HEK293T (cell line): ENCODE measurements at regions of chrX and their contacts with region 1.

Region 1: DNA sequence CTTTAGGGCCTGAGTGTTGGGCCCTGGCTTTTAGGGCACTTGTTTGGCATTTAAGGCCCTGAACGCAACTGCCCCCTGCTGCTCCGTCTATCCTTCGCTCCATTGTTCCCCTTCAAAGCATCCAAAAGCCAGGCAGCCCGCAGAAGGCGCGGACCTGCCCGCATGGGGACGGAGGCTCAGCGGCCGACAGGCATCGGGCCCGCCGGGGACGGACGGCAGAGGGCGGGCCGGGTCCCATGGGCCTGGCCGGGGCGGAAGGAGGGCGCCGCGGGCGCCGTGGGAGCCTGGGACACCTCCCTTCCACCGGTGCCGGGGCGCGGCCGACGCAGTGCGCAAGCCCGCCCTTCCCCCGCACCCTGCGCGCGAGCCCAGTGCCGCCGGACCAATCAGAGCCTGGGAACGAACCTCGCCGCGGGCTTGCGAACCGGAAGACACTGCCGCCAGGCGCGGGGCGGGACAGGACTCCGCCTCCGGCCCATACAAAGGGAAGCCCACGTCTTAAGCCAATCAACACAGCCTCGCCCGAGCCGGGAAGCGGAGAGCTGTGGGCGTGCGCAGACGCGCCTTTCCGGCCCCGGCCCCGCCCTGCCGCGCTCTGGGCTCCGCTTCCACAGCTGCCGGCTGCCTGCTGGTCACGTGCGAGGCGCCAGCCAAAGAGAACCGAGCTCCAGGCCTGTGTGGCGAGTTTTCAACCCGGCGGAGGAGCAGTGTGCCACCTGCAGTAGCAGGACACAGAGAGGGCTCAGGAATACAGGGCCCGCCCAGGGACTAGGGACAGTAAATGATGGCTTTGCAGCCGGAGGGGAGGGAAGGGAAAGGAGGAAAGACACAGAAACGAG is 2.1 kb upstream of the ARHGAP4 start:
- DNase-seq: peak; percentile 98

Region 2: DNA sequence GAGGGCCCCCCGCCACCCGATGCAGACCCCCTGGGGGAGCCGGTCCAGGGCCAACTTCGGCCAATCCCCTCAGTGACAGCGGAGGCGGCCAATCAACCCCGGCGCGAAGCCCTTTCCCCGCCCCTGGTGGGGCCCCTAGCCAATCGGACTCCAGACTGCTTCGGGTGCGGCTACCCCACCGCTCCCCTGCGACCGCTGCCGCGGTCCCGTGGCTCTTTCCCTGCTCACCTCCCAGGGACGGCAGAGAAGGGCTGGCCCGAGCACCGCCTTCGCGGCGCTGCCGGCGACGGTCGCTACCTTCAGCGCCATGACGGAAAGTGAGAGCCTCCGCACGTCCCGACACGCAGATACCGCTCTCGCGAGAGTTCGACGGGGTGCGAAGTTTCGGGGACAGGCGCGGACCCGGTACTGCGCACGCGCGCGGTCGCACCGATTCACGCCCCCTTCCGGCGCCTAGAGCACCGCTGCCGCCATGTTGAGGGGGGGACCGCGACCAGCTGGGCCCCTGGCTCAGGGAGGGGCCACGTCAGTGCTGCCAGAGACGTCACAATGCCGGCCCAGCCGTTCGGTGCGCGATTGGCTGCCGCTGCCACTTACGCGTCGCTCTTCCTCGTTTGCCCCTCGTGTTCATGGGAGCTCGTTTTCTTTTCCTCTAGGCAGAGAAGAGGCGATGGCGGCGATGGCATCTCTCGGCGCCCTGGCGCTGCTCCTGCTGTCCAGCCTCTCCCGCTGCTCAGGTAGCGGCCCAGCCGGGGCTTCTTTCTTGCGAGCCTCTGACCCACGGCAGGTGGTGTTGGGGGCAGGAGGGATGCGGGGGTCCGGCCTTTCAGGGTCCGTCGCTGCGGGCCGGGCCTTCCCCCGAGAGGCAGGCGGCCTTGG is 133.9 kb before region 1 on chrX and contains the starts of genes IDH3G and SSR4:
- CTCF ChIA-PET with region 1: no interaction called
- POLR2A ChIA-PET with region 1: interaction called, 11 read pairs
- DNase-seq: peak; percentile 99

Region 3: GRCh38 chrX:153909024-153909970 is 18.8 kb before region 1 on chrX:
- CTCF ChIA-PET with region 1: interaction called, 42 read pairs
- POLR2A ChIA-PET with region 1: interaction called, 28 read pairs
- DNase-seq: peak; percentile 44

Region 4: DNA sequence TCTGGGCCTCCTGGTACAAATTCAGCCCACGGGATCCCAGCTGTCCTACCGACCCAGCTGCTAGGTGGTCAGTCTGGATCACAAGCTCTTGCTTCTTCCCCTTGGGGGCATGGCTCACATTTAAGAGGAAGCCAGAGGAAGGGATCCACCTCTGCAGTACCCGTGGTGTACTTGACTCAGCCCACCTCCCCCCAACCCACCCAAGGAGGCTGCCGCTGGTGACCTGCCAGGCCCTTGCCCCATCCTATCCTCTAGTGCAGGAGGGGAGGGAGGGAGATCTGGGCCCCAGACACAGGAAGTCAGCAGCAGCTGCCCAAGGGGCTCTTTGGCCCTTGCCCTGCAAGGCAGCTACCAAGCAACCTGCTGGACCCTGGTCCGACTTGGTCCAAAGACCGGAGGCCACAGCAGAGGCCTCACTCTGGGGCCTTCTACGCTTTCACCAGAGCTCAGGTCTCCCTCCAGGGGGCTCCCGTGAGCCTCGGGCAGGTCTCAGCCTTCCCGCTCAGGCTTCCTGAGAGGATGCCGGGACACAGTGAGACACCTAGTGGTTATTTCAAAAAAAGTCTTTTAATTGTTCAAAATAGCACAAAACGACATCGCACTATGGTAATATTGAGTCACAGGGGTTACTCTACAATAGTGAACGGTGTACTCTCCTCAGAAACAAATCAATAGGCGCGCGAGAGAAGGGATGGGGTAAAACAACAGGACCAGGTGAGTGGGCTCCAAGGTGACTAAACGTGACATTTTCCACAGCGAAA is 19.0 kb after region 1 on chrX:
- CTCF ChIA-PET with region 1: interaction called, 100 read pairs
- POLR2A ChIA-PET with region 1: interaction called, 65 read pairs
- DNase-seq: peak; percentile 88

Region 5: GRCh38 chrX:153971450-153972367 is 43.6 kb after region 1 on chrX and contains the start of gene HCFC1:
- CTCF ChIA-PET with region 1: interaction called, 5 read pairs
- POLR2A ChIA-PET with region 1: interaction called, 15 read pairs
- DNase-seq: peak; percentile 83